MCF 10A (cell line): ENCODE measurements at regions of chr7 and their contacts with region 1.

Region 1: DNA sequence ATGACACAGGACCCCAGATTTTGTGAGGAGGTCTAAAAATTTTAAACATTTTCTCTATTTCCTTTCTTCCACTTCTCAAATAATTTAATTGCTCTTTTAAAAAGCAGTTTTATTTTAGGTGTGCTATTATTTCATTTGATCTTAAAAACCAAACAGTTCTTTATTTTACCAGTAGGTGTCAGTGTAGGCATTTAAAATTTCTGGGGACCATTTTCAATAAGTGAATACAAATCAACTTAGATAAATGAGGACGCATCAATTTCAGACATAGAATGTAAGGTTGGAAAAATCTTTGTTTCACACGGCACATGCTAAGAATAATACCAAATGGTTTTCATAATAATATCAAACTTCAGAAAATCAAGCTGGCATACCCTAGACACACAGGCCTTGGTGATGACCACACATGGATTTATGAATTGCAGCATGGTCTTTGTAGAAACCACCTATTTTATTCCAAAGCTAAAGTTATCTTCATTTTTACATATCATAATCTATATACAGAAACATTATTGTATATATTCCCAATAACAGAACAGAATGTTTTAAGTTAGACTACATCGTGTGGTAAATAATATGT is 127.6 kb upstream of the SLC26A5 start:
- DNase-seq: peak; percentile 43
- H3K4me3 Mint-ChIP-seq: no peak overlapping the region
- H3K27ac Mint-ChIP-seq: no peak overlapping the region
- H3K4me1 Mint-ChIP-seq: no peaks in the 10 kb centered on the region
- H3K27me3 Mint-ChIP-seq: peaks cover 71% of the 10 kb centered on the region
- CTCF ChIP-seq: peak; percentile 57

Region 2: GRCh38 chr7:102991540-102992214 is 581.9 kb before region 1 on chr7:
- CTCF ChIA-PET with region 1: no interaction called
- POLR2A ChIA-PET with region 1: no interaction called
- intact Hi-C with region 1: no loop called
- DNase-seq: peak; percentile 92
- H3K4me3 Mint-ChIP-seq: no peak overlapping the region
- H3K27ac Mint-ChIP-seq: no peak overlapping the region
- H3K4me1 Mint-ChIP-seq: no peaks in the 10 kb centered on the region
- H3K27me3 Mint-ChIP-seq: no peaks in the 10 kb centered on the region
- CTCF ChIP-seq: no peak

Region 3: GRCh38 chr7:103752997-103753396 is 179.4 kb after region 1 on chr7:
- CTCF ChIA-PET with region 1: interaction called, 3 read pairs
- POLR2A ChIA-PET with region 1: no interaction called
- intact Hi-C with region 1: loop called (anchors 2 kb)
- DNase-seq: no peak
- H3K4me3 Mint-ChIP-seq: no peak overlapping the region
- H3K27ac Mint-ChIP-seq: no peak overlapping the region
- H3K4me1 Mint-ChIP-seq: no peaks in the 10 kb centered on the region
- H3K27me3 Mint-ChIP-seq: peaks cover 28% of the 10 kb centered on the region
- CTCF ChIP-seq: peak; percentile 21

Region 4: GRCh38 chr7:104096683-104097082 is 523.1 kb after region 1 on chr7:
- CTCF ChIA-PET with region 1: no interaction called
- POLR2A ChIA-PET with region 1: no interaction called
- intact Hi-C with region 1: loop called (anchors 1 kb)
- DNase-seq: peak; percentile 43
- H3K4me3 Mint-ChIP-seq: no peak overlapping the region
- H3K27ac Mint-ChIP-seq: no peak overlapping the region
- H3K4me1 Mint-ChIP-seq: no peaks in the 10 kb centered on the region
- H3K27me3 Mint-ChIP-seq: peaks cover 49% of the 10 kb centered on the region
- CTCF ChIP-seq: no peak

Region 5: GRCh38 chr7:104156842-104157277 is 583.3 kb after region 1 on chr7:
- CTCF ChIA-PET with region 1: interaction called, 33 read pairs
- POLR2A ChIA-PET with region 1: no interaction called
- intact Hi-C with region 1: loop called (anchors 1 kb)
- DNase-seq: peak; percentile 22
- H3K4me3 Mint-ChIP-seq: no peak overlapping the region
- H3K27ac Mint-ChIP-seq: no peak overlapping the region
- H3K4me1 Mint-ChIP-seq: no peaks in the 10 kb centered on the region
- H3K27me3 Mint-ChIP-seq: no peaks in the 10 kb centered on the region
- CTCF ChIP-seq: peak; percentile 43

Region 6: DNA sequence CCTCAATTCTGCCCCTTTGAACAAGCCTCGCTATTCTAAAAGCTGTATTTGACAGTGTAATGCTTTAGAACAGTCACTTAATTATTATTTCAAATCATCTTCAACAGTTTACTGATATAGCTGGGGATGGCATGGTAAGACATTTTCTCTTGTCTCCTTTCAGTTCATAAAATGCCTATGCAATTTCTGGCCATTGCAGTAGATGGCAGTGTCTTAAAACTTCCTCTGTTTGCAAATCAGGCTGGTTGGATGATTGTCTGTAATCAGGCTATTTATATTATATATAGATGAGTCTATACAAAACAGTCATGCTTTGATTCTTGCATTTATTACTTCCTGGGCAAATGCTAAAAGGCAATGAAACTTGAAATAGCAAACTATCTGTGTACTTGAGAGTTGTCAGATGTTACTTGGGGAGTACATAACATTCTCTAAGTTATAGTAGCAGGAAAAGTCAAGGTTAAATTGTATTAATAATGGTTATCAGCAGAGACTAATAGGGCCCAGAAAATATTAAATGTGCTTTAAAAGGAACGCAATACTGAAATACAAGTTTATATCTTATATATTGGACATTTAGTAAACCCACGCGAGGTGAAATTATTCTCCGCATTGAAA is 699.3 kb after region 1 on chr7:
- CTCF ChIA-PET with region 1: interaction called, 4 read pairs
- POLR2A ChIA-PET with region 1: no interaction called
- intact Hi-C with region 1: loop called (anchors 10 kb)
- DNase-seq: peak; percentile 50
- H3K4me3 Mint-ChIP-seq: no peak overlapping the region
- H3K27ac Mint-ChIP-seq: no peak overlapping the region
- H3K4me1 Mint-ChIP-seq: no peaks in the 10 kb centered on the region
- H3K27me3 Mint-ChIP-seq: peaks cover 50% of the 10 kb centered on the region
- CTCF ChIP-seq: peak; percentile 41